Motor neuron (in vitro differentiated cells): ENCODE measurements at regions of chr2 and their contacts with region 1.

Region 1: GRCh38 chr2:120343433-120344105 is 2.4 kb upstream of the INHBB start:
- ATAC-seq: peak; percentile 52 to 84 (median 63)
- H3K4me3 ChIP-seq: peak overlapping the region in 1 of 5 donors; percentile 10
- H3K27ac ChIP-seq: no peak overlapping the region
- H3K4me1 ChIP-seq: peaks cover 6 to 14% of the 10 kb centered on the region in 2 donors

Region 2: DNA sequence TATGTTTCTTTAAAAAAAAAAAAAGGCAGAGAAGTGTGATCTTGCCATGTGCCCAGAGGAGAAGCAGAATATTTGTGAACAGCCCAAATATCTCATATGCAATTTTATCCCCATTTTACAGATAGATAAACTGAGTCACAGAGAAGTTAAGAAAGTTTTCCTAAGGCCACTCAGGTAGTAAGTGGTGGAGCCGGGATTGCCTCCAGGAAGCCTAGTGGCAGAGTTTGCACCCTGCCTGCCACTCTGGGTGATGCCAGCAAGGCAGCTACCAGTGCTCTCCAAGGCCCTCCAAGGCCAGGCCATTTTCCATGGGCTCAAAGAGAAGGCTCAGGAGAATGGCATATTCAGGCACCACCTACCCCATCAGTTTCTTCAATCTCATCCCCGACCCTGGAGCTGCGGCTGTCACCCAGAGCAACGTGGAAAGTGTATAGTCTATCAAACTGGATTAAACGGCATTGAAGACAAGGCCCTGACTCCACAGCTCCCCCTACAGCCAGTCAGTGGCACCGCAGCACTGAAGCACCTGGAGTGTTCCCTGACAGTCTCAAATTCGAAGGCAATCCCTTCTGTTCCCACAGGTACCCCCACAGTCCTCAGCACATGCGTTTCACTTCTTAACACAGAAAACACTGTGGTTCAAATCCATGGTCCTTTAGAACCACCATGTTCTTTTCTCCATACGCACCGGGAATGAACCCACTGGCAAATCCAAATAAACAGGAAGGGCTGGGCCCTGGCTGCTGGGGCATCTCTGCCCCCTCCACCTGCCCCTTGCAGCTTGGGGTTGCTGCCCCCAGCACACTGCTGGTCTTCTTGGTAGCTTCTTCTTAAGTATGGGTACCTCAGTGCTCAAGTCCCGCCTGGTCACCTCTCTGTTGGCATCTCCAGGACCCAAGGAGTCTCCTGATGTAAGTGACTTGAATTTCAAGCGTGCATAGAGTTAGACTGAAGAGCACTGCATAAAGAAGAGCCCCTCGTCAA is 177.7 kb after region 1 on chr2:
- in situ Hi-C with region 1: loop called in 2 of 9 experiments (anchors 25 kb)
- ATAC-seq: peak in 3 of 8 experiments; percentile 71 to 86 (median 76)
- H3K4me3 ChIP-seq: no peak overlapping the region
- H3K27ac ChIP-seq: no peak overlapping the region
- H3K4me1 ChIP-seq: peaks cover 16 to 25% of the 10 kb centered on the region in 2 donors

Region 3: GRCh38 chr2:120680136-120680761 is 336.7 kb after region 1 on chr2:
- in situ Hi-C with region 1: loop called in 8 of 9 experiments (anchors 5 to 25 kb)
- ATAC-seq: peak; percentile 78 to 95 (median 94)
- H3K4me3 ChIP-seq: no peak overlapping the region
- H3K27ac ChIP-seq: no peak overlapping the region
- H3K4me1 ChIP-seq: peaks cover 3 to 4% of the 10 kb centered on the region in 2 donors